Keratinocyte (primary cell): ENCODE measurements at regions of chr13 and their contacts with region 1.

Region 1: DNA sequence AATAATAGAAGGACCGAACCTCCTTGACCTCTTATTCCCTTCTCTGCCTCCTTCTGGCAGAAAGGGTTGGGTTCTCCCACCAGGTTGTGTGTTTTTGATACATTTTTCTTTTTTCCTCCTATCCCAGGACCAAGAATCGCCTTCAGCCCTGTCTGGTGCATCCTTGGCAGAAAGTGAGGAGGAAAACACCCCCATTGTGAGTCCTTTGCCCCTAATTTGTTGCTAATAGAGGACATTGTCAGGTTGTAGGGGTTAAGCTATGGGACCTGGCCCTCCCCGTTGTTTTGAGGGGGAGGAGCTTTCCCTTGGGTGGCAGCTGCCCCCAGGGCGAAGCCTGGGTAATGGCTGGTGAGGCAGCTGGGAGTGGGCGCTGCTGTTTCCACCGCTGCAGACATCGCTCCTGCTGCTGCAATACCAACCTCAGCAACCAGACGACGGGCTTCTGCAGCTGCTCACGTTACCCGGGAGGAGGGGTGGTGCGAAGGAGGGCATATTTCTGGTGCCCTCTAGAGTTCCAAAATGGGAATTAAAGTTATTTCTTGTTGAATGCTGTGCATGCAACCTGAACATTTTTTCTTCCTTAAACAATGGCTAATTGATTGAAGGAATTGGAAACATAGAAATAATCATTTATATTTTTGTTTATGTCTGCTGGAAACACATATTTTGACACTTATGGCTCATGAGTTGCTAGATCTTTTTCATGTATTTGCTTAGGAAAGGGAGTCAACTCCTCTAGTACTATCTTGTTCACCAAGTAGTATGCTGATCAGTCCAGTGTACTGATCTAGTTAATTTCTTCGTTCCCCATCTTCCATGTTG is 1.5 kb downstream of the ZMYM2 start:
- DNase-seq: peak; percentile 50
- H3K4me3 ChIP-seq: peak overlapping the region; percentile 68 to 91 (median 76)
- H3K27ac ChIP-seq: peak overlapping the region; percentile 87
- H3K4me1 ChIP-seq: peaks cover 7% of the 10 kb centered on the region
- H3K27me3 ChIP-seq: no peaks in the 10 kb centered on the region
- CTCF ChIP-seq: peak; percentile 78 to 95 (median 92)

Region 2: GRCh38 chr13:19810001-19810555 is 150.0 kb before region 1 on chr13:
- dilution Hi-C with region 1: no loop called
- DNase-seq: no peak
- H3K4me3 ChIP-seq: no peak overlapping the region
- H3K27ac ChIP-seq: no peak overlapping the region
- H3K4me1 ChIP-seq: no peaks in the 10 kb centered on the region
- H3K27me3 ChIP-seq: no peaks in the 10 kb centered on the region
- CTCF ChIP-seq: no peak

Region 3: DNA sequence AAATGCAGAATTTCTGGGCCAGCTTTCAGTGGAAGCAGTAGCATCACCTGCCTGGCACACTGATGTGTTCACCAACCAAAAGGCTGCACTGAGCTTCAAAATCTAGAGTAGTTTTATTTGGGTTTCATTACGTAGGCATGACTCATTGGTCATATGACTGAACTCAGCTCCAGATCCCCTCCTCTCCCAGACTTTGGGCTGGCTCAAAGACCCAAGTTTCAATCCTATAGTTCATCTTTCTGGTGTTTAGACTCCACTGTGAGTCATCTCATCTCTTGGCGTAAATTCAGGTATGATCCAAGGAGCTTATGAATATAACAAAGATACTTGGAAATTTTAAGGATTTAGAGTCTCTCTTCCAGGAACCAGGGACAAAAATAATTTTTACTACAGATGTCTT is 114.3 kb before region 1 on chr13:
- dilution Hi-C with region 1: loop called (anchors 25 kb)
- DNase-seq: peak; percentile 79
- H3K4me3 ChIP-seq: no peak overlapping the region
- H3K27ac ChIP-seq: peak overlapping the region; percentile 72
- H3K4me1 ChIP-seq: peaks cover 10% of the 10 kb centered on the region
- H3K27me3 ChIP-seq: no peaks in the 10 kb centered on the region
- CTCF ChIP-seq: no peak

Region 4: DNA sequence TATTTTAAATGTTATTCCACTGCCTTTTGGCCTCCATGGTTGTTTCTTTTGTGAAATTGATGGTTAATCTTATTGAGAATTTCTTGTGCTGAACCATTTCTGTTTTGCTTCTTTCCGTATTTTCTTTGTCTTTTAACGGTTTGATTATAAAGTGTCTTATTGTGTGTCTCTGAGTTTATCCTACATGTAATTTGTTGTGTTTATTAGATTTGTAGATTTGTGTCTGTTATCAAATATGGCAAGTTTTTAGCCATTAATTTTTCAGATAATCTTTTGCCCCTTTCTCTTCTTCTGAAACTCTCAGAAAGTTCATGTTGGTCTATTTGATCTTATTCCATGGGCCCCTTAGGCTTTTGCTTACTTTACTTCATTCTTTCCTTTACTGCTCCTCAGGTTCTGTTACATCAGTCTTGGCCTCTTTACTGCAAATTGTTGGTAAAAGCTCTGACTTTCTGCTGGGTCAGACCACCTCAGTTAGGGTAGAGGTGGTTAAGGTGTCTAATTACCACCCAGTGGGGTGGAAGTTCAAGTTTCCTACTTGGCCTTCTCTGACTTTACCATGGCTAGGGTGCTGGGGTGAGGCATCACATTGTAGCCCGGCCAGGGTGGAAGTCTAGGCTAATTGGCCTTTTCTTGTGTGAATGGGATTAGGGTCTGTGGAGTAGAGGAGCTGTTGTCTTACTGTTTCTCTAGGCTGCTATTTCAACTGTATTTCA is 56.8 kb after region 1 on chr13:
- dilution Hi-C with region 1: no loop called
- DNase-seq: no peak
- H3K4me3 ChIP-seq: no peak overlapping the region
- H3K27ac ChIP-seq: no peak overlapping the region
- H3K4me1 ChIP-seq: peaks cover 13% of the 10 kb centered on the region
- H3K27me3 ChIP-seq: no peaks in the 10 kb centered on the region
- CTCF ChIP-seq: no peak